ENCODE measurements at regions of chr11 and their contacts with region 1.

Region 1: DNA sequence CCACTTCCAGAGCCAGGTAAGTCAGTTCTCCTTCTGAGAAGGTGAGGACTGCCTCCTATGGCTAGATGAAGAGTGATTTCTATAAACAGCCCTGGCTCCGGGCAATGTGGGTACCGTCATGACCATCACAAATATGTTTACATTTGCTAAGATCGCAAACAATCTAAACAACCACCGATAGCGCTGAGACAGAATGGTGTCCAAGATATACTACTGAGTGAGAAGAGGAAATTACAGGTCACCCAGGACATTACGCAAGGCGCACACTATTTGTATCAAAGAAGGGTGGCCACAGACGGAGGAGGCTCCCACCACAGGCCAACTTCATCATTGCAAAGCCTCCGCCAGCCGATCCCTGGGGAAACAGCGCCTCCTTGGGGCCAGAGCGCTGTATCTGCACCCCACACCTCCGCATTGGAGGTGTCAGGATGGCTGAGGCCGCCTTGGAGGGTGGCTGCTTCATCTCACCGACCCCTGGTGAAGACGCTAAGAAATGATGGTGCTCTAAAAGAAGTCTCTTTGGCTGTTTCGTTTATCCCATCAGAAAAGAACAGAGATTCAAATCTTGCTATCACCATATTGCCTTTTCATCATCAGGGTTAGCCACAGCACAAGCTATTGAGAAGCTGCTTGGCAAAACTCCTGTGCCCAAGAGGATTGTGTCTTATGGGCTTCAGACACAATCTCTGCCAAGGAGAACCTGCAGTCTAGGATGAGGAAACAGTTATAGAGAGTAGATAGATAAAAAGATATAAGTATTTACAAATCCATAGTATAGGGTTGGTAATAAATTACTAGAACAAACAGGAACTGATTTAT is 12.3 kb upstream of the ASRGL1 start:
- DNase-seq: peak; percentile 41 to 91
- H3K4me3 ChIP-seq: no peak overlapping the region
- H3K27ac ChIP-seq: no peak overlapping the region
- H3K4me1 ChIP-seq: no peaks in the 10 kb centered on the region
- H3K27me3 ChIP-seq: 0 out of 7 replicates have a peak, but pooled peaks cover 0 to 2% (median 0%) of the 10 kb centered on the region in 4 experiments
- CTCF ChIP-seq: peak; percentile 98 to 100 (median 99)
- EP300 ChIP-seq: no peak
- POLR2A ChIP-seq: no peak
- RAD21 ChIP-seq: peak; percentile 95 to 98

Region 2: DNA sequence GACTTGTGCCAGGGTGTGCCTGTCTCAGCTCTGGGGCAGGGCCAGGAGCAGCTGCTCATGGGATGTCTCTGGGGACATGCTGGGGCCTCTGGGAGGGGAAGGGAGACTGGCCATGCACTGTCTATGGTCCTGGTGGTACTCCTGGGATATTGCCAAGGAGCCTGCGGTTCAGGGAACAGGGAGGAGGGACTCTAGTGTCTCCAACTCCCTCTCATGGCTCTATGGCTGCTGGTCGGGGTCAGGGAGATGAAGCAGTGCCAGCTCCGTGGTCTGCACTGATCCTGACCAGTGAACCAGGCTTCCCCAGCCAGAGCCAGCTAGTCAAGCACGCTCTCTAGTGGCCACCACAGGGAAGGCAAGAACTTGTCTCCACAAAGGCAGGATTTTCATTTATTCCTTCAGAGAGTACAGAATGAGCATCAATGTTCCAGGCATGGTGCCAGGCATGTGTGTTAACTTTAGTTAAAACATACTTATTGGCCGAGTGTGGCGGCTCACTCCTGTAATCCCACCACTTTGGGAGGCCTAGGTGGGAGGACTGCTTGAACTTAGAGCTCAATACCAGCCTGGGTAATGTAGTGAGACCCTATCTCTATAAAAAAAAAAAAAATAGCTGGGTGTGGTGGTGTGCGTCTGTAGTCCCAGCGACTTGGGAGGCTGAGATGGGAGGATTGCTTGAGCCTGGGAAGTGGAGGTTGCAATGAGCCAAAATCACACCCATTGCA is 377.3 kb before region 1 on chr11:
- CTCF ChIA-PET with region 1: no interaction called
- POLR2A ChIA-PET with region 1: no interaction called
- DNase-seq: peak; percentile 60 to 86
- H3K4me3 ChIP-seq: no peak overlapping the region
- H3K27ac ChIP-seq: no peak overlapping the region
- H3K4me1 ChIP-seq: no peaks in the 10 kb centered on the region; a peak in 1 of 7 replicates
- H3K27me3 ChIP-seq: no peaks in the 10 kb centered on the region
- CTCF ChIP-seq: peak; percentile 89 to 99 (median 98)
- EP300 ChIP-seq: no peak
- POLR2A ChIP-seq: no peak
- RAD21 ChIP-seq: peak; percentile 100

Region 3: GRCh38 chr11:62309991-62310390 is 15.0 kb before region 1 on chr11:
- CTCF ChIA-PET with region 1: interaction called, 27 read pairs
- POLR2A ChIA-PET with region 1: no interaction called
- DNase-seq: no peak
- H3K4me3 ChIP-seq: no peak overlapping the region
- H3K27ac ChIP-seq: no peak overlapping the region
- H3K4me1 ChIP-seq: peaks cover 0 to 2% (median 0%) of the 10 kb centered on the region in 4 experiments; a peak in 3 of 7 replicates
- H3K27me3 ChIP-seq: no peaks in the 10 kb centered on the region
- CTCF ChIP-seq: no peak
- EP300 ChIP-seq: no peak
- POLR2A ChIP-seq: no peak
- RAD21 ChIP-seq: no peak

Region 4: DNA sequence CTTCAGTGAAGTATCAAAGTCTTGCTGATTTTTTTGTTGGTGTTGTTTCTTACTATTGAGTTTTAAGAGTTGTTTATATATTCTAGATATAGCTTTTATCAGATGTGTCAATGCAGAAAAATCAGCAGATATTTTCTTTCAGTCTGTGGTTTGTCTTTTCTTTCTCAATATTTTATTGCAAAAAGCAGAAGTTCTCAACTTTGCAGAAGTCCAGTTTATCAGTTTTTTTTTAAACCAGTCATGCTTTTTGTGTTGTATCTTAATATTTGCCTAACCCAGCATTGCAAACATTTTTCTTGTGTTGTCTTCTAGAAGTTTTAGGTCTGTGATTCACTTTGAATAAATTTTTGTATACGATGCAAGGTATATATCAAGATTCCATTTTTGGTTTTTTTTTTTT is 19.3 kb after region 1 on chr11:
- CTCF ChIA-PET with region 1: interaction called, 11 read pairs
- POLR2A ChIA-PET with region 1: interaction called, 3 read pairs
- DNase-seq: no peak
- H3K4me3 ChIP-seq: no peak overlapping the region
- H3K27ac ChIP-seq: no peak overlapping the region
- H3K4me1 ChIP-seq: peaks cover 0 to 4% (median 0%) of the 10 kb centered on the region in 4 experiments; a peak in 1 of 7 replicates
- H3K27me3 ChIP-seq: no peaks in the 10 kb centered on the region
- CTCF ChIP-seq: no peak
- EP300 ChIP-seq: no peak
- POLR2A ChIP-seq: no peak
- RAD21 ChIP-seq: no peak

Measured in H1 (cell line).